ENCODE measurements at regions of chr4 and their contacts with region 1.

Region 1: DNA sequence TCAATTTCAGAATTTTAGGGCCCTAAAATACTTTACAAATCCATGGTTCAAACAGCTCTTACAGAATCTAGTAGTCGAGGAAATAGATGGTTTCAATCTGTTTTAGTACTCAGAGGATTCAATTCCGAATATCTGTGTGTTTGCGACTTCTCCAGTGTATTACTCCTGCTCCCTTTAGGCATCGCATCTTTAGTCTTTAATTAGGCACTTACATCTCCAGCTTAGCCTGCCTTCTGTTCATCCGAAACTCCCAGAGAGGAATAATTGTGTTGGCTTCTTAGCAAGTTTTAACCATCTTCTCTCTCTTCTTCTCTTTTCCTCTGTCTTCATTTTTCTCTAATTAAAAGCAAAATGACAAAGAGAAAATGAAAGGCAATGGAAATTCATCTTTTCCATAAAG is 1901.3 kb upstream of the TENM3 start:
- DNase-seq: no peak

Region 2: DNA sequence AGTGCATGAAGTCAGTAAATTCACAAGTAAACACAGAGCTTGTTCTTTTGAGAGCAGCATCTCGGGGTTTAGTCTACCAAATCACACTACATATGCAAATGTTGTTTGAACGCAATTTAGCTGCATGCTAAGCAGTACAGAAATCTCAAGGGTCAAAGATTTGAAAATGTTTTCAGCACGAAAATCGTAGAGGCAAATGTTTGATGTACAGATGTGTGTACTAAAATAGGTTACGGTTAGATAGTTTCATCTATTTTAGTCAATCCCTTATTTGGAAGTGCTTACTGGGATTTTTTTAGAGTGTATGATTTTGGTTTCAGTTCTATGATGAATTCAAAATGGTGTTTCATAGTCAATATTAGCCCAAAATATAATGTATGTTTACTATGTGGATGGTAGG is 27.0 kb before region 1 on chr4:
- intact Hi-C with region 1: no loop called
- DNase-seq: no peak

Region 3: DNA sequence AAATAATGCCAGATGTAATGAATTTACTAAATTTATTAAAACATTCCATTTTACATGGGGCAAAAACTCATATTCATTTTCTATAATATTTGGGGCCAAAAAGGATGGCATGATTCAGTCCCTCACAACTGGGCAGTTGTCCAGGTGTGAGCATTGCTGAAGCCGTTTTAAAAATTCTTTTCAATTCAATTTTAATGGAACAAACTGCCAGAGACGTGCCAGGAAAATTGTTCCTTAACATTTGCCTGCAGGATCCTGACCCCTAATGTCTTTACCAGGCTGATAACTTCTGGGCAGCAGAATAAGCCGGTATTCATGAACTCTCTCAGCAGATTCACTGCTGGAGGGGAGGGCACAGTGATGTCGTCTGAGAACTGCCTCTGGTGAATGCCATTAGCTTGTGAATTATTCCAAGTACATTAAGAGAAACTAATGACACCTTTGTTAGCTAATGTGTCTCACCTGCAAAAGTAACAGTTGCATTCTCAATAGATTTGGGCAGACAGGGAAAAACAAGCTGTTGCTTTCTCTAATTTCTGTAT is 456.2 kb after region 1 on chr4:
- intact Hi-C with region 1: no loop called
- DNase-seq: no peak

Region 4: DNA sequence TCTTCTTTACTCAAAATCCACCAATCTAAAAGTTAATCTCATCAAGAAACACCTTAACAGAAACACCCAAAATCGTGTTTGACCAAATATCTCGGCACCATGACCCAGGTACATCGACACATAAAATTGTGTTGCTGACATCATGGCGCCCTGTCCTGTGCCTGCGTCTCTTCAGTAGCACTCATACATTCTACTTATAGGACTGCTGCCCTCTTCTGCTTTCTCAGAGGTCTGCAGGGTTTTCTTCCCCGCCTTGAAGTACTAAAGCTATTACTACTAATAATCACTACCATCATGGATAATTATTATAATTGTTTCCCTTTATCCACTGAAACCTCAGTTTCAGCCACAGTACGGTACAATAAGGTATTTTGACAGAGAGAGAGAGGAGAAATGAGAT is 498.2 kb after region 1 on chr4:
- intact Hi-C with region 1: loop called in 1 of 2 experiments (anchors 10 kb)
- DNase-seq: no peak

Measured in posterior vena cava (tissue), 2 donors.